ENCODE measurements at regions of chr1 and their contacts with region 1.

Region 1: DNA sequence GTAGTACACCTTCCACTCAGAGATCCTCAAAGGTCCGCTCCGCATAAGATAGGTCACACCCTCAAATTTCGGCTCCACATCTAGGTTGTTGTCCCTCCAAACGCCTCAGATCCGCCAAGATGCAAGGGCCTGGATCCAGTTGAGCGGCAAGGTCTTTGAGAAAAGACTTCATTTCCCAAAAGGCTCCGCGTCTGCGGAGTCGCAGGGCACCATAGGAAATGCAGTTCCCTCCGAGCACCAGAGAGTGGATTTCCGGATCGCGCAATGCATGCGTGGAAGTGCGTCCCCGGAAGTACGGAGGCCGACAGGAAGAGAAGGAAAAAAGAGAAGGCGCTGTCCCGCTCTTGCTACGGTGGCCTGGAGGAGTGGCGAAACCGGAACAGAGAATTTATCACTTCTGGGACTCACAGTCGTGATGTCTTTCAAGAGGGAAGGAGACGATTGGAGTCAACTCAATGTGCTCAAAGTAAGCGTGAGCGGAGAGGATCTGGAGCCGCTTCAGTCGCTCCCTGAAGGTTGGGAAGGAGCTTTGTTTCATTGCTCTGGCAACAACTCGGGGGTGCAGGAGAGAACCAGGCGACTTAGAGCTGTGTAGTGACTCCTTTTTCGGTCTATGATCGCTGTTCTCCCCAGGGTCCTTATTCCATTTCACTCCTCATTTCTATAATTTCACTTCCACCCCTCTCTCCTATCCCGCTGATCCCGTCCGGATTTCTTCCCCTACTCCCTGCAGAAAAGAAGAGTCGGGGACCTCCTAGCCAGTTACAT is at the starts of genes LYSMD1 and SCNM1:
- DNase-seq: peak; percentile 96
- H3K4me3 Mint-ChIP-seq: peak within 1 kb of the TSS; percentile 95
- H3K27ac Mint-ChIP-seq: peak within 1 kb of the TSS; percentile 97
- H3K4me1 Mint-ChIP-seq: peaks cover 53% of the 10 kb centered on the region
- H3K27me3 Mint-ChIP-seq: peaks cover 2% of the 10 kb centered on the region
- total RNA-seq, gene LYSMD1: 4.0 and 5.0 TPM in 2 replicates
- total RNA-seq, gene SCNM1: 111 and 117 TPM in 2 replicates

Region 2: GRCh38 chr1:151189638-151190445 is 23.9 kb after region 1 on chr1 and contains the start of gene VPS72:
- intact Hi-C with region 1: loop called (anchors 1 kb)
- DNase-seq: peak; percentile 83
- H3K4me3 Mint-ChIP-seq: peak within 1 kb of the TSS; percentile 99
- H3K27ac Mint-ChIP-seq: peak within 1 kb of the TSS; percentile 97
- H3K4me1 Mint-ChIP-seq: peaks cover 36% of the 10 kb centered on the region
- H3K27me3 Mint-ChIP-seq: peaks cover 7% of the 10 kb centered on the region
- total RNA-seq, gene VPS72: 90.0 and 96.4 TPM in 2 replicates

Measured in activated T-helper 1 cell treated with anti-CD3 and anti-CD28 coated beads, Interleukin-12 subunit alpha, Interleukin-12 subunit beta, Interleukin-2, Interleukin-4 antibody, amounts not matched to agents 30 ng/mL and 10 ng/mL and 1 ng/mL, durations not matched to agents 14 hours and 24 hours and 36 hours (primary cell).